Vagina (tissue), 2 donors: ENCODE measurements at regions of chr1 and their contacts with region 1.

Region 1: GRCh38 chr1:201122321-201122957 is 4.5 kb downstream of the ASCL5 start:
- DNase-seq: no peak
- H3K4me3 ChIP-seq: no peak overlapping the region
- H3K27ac ChIP-seq: no peak overlapping the region
- H3K4me1 ChIP-seq: no peaks in the 10 kb centered on the region
- H3K27me3 ChIP-seq: no peaks in the 10 kb centered on the region
- CTCF ChIP-seq: no peak
- POLR2A ChIP-seq: no peak

Region 2: DNA sequence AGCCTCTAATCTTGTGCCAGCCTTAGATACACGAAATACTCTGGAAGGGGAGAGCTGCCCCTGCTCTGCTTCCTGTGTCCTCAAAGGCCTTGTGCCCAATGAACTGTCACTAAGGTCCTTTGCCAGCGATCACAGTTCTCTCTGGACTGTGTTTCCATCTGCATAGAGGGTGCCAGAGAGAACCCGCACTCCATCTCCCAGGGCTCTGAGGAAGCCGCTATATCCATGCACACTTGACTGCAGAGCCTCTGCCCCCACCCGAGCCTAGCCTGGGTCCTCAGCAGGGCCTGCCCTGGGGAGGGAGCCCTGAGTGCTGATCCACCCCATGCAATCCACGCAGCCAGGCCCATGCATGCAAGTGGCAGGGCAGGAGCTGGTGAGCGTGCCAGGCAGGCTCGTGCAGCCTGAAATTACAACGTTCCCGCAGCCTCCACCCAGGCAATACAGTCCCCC is 68.3 kb before region 1 on chr1:
- intact Hi-C with region 1: loop called (anchors 2 kb)
- DNase-seq: no peak
- H3K4me3 ChIP-seq: no peak overlapping the region
- H3K27ac ChIP-seq: no peak overlapping the region
- H3K4me1 ChIP-seq: no peaks in the 10 kb centered on the region
- H3K27me3 ChIP-seq: no peaks in the 10 kb centered on the region
- CTCF ChIP-seq: no peak
- POLR2A ChIP-seq: no peak